ENCODE measurements at regions of chr10 and their contacts with region 1.

Region 1: GRCh38 chr10:110746254-110746826 is 102.2 kb downstream of the RBM20 start:
- DNase-seq: peak; percentile 73
- ATAC-seq: peak; percentile 87
- H3K4me3 ChIP-seq: no peak overlapping the region
- H3K27ac ChIP-seq: no peak overlapping the region
- H3K4me1 ChIP-seq: no peaks in the 10 kb centered on the region
- H3K27me3 ChIP-seq: no peaks in the 10 kb centered on the region
- CTCF ChIP-seq: peak; percentile 78

Region 2: GRCh38 chr10:110260746-110261477 is 485.4 kb before region 1 on chr10:
- CTCF ChIA-PET with region 1: no interaction called
- POLR2A ChIA-PET with region 1: no interaction called
- intact Hi-C with region 1: no loop called
- DNase-seq: no peak
- ATAC-seq: no peak
- H3K4me3 ChIP-seq: no peak overlapping the region
- H3K27ac ChIP-seq: no peak overlapping the region
- H3K4me1 ChIP-seq: no peaks in the 10 kb centered on the region
- H3K27me3 ChIP-seq: no peaks in the 10 kb centered on the region
- CTCF ChIP-seq: no peak

Region 3: DNA sequence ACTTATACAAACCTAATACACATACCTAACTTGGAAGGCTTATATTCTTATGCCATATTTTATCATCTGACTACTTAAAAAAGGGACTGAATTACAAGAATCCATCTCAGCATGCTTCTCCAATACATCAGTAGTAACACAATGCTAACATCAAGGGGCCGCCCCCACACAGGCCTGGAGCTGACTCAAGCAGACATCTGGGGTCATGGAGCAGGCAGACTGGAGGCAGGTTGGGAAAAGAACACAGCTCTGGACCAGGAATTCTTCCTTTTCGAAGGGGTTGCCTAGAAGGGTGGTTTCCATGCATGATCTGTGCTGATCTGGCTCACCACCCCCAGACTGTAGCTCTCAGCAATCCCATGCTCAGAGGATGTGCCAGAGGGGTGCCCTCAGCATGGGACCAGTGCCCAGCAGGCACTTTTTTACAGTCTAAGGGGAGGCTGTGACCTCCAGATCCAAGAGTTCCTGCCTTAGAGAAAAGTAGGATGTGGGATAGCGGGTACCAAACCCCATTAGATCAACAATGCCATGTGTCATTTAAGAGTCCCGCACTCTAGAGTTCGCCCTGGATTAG is 274.7 kb before region 1 on chr10:
- CTCF ChIA-PET with region 1: no interaction called
- POLR2A ChIA-PET with region 1: interaction called, 10 read pairs
- intact Hi-C with region 1: no loop called
- DNase-seq: no peak
- ATAC-seq: no peak
- H3K4me3 ChIP-seq: no peak overlapping the region
- H3K27ac ChIP-seq: no peak overlapping the region
- H3K4me1 ChIP-seq: no peaks in the 10 kb centered on the region
- H3K27me3 ChIP-seq: no peaks in the 10 kb centered on the region
- CTCF ChIP-seq: no peak

Region 4: GRCh38 chr10:110762849-110763211 is 16.5 kb after region 1 on chr10:
- CTCF ChIA-PET with region 1: no interaction called
- POLR2A ChIA-PET with region 1: no interaction called
- intact Hi-C with region 1: no loop called
- DNase-seq: no peak
- ATAC-seq: no peak
- H3K4me3 ChIP-seq: no peak overlapping the region
- H3K27ac ChIP-seq: no peak overlapping the region
- H3K4me1 ChIP-seq: peaks cover 13% of the 10 kb centered on the region; the same call in 1 of the 2 replicates
- H3K27me3 ChIP-seq: no peaks in the 10 kb centered on the region
- CTCF ChIP-seq: no peak

Region 5: DNA sequence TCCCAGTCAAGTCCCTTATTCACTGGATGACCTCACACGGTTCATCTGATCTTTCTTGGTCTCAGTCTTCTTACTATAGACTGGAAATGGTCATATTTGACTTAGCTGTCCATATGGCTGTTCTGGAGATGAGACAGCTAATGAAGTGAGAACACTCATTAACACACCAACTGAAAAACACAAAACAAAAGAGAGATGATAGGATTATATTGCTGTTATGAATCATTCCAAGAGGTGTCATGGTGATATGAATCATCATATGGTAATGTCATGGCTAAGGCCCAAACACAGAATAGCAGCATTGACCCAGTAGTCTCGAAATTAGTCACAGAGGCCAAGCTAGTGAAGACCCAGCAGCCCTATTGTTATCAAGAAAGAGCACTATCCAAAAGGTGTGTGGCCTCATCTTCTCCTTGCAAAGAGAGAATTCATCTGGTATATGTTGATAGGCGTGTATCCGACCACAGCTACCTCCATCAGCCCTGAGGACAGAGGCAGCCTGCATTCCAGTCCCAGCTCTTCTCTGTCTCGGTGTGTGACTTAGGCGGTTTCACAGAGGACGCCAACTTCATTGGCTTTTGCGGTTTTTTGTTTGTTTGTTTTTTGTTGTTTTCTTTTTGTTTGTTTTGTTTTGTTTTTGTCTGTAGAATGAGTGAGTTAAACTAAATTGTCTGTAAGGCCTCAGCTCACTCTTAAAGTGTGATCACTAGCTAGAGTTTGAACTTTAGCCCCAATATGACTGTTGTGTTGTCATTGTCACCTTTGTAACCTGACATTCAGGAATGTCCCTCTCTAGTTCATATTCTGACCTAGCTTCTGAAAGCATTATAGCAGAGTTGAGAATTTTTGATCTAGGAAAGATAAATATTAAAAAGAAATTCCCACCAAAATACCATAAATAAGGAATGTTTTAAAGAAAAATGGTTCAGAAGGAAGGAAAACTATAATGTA is 28.0 kb after region 1 on chr10:
- CTCF ChIA-PET with region 1: no interaction called
- POLR2A ChIA-PET with region 1: no interaction called
- intact Hi-C with region 1: loop called (anchors 2 kb)
- DNase-seq: peak; percentile 83
- ATAC-seq: peak; percentile 82
- H3K4me3 ChIP-seq: peak overlapping the region; percentile 43
- H3K27ac ChIP-seq: peak overlapping the region; percentile 89
- H3K4me1 ChIP-seq: peaks cover 27% of the 10 kb centered on the region
- H3K27me3 ChIP-seq: no peaks in the 10 kb centered on the region
- CTCF ChIP-seq: no peak

Region 6: DNA sequence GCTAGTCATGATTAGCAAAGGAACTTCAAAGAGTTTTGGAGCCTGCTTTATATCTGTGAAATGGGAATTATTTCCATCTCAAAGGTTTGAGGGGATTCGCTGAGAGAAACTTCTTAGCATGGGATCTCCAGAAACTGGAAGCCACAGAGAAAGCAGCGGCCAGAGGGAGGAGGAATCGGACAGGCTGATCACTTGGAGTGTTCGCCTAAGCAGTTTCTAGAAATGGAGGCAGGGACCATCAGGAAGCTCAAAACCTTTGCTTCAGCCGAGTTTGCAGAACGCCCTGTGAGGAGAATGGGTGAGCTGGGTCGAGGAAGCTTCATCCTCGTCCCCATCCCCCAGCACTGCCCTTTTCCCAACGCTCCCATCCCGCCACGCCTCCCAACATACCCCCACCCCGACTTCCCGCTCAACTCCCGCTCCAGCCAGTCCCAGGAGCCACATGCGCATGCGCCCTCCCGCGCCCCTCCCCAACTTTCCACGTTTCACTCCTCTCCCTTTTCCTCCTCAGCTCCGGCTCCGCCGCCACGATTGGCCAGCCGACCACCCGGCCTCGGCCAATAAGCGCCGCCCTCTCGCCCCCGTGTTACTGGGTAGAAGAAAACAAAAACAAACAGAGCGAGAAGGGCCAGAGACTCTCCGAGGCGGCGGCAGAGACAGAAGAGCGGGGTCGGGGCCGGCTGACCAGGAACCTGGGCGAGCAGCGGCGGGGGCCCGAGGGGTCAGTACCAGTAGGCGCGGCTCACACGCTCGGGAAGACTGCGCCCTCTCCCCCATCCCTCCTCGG is 125.2 kb after region 1 on chr10 and contains the start of gene PDCD4:
- CTCF ChIA-PET with region 1: interaction called, 3 read pairs
- POLR2A ChIA-PET with region 1: no interaction called
- intact Hi-C with region 1: loop called (anchors 5 kb)
- DNase-seq: peak; percentile 93
- ATAC-seq: peak; percentile 90
- H3K4me3 ChIP-seq: peak within 1 kb of the TSS; percentile 86
- H3K27ac ChIP-seq: peak within 1 kb of the TSS; percentile 46
- H3K4me1 ChIP-seq: peaks cover 17% of the 10 kb centered on the region
- H3K27me3 ChIP-seq: no peaks in the 10 kb centered on the region
- CTCF ChIP-seq: no peak
- total RNA-seq, gene PDCD4: 19.4 and 24.4 TPM in 2 replicates

Region 7: GRCh38 chr10:110918643-110919363 is 172.5 kb after region 1 on chr10 and contains the start of gene BBIP1:
- CTCF ChIA-PET with region 1: interaction called, 3 read pairs
- POLR2A ChIA-PET with region 1: interaction called, 5 read pairs
- intact Hi-C with region 1: loop called (anchors 5 kb)
- DNase-seq: peak; percentile 98
- ATAC-seq: peak; percentile 83
- H3K4me3 ChIP-seq: peak within 1 kb of the TSS; percentile 83
- H3K27ac ChIP-seq: peak within 1 kb of the TSS; percentile 85
- H3K4me1 ChIP-seq: peaks cover 36% of the 10 kb centered on the region
- H3K27me3 ChIP-seq: no peaks in the 10 kb centered on the region
- CTCF ChIP-seq: no peak
- total RNA-seq, gene BBIP1: 12.0 and 19.6 TPM in 2 replicates